ENCODE measurements at regions of chr9 and their contacts with region 1.

Region 1: GRCh38 chr9:90642570-90643539 is at the start of gene DIRAS2:
- DNase-seq: peak; percentile 67
- ATAC-seq: peak; percentile 76
- total RNA-seq, gene DIRAS2: not detected

Region 2: GRCh38 chr9:89597711-89598625 is 1044.9 kb before region 1 on chr9:
- intact Hi-C with region 1: loop called (anchors 10 kb)
- DNase-seq: no peak
- ATAC-seq: peak; percentile 56